ENCODE measurements at regions of chr12 and their contacts with region 1.

Region 1: DNA sequence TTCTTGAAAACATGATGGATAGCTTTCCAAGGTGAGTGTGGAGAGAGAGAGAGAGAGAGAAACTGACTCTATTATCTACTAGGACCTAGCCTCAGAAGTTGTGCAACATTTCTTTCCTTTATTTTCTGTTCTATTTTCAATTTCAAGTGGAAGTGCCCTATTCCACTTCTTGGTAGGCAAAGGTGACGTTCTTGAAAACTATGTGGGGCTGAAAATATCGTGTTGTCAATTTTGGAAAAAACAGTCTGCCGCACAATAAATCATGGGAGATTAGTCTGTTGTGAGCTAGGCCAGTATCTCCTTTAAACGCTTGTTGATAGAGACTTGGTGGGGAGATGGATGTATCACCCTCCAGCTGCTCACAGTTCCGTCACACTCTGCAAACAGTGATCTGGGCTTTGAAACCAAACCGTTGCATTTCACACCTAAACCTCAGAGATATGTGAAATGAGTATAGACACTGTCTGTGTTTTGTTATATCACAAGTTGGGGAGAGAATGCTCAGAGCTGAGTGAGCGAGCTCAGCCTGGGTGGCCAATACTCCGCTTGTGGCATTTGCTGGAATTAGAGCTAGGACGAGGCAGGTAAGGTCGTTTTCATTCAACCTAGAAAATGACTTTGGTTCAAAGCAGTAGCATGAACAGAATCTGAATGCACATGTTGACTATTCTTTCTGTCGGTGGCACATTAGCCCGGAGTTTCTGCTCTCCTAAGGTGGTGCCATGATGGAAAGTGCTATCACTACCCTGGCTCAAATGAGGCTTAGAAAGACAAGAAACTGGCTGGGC is 75.1 kb upstream of the ST8SIA1 start:
- DNase-seq: no peak
- ATAC-seq: no peak
- H3K4me3 Mint-ChIP-seq: no peak overlapping the region
- H3K27ac Mint-ChIP-seq: no peak overlapping the region
- H3K4me1 Mint-ChIP-seq: no peaks in the 10 kb centered on the region
- H3K27me3 Mint-ChIP-seq: no peaks in the 10 kb centered on the region
- CTCF ChIP-seq: no peak

Region 2: GRCh38 chr12:22377731-22378496 is 31.7 kb before region 1 on chr12:
- CTCF ChIA-PET with region 1: no interaction called
- POLR2A ChIA-PET with region 1: no interaction called
- intact Hi-C with region 1: loop called (anchors 5 kb)
- DNase-seq: no peak
- ATAC-seq: no peak
- H3K4me3 Mint-ChIP-seq: no peak overlapping the region
- H3K27ac Mint-ChIP-seq: no peak overlapping the region
- H3K4me1 Mint-ChIP-seq: peaks cover 11% of the 10 kb centered on the region
- H3K27me3 Mint-ChIP-seq: no peaks in the 10 kb centered on the region
- CTCF ChIP-seq: no peak

Region 3: GRCh38 chr12:22658214-22658613 is 248.6 kb after region 1 on chr12:
- CTCF ChIA-PET with region 1: no interaction called
- POLR2A ChIA-PET with region 1: no interaction called
- intact Hi-C with region 1: no loop called
- DNase-seq: no peak
- ATAC-seq: no peak
- H3K4me3 Mint-ChIP-seq: no peak overlapping the region
- H3K27ac Mint-ChIP-seq: no peak overlapping the region
- H3K4me1 Mint-ChIP-seq: peaks cover 18% of the 10 kb centered on the region
- H3K27me3 Mint-ChIP-seq: no peaks in the 10 kb centered on the region
- CTCF ChIP-seq: no peak